ENCODE measurements at regions of chr6 and their contacts with region 1.

Region 1: DNA sequence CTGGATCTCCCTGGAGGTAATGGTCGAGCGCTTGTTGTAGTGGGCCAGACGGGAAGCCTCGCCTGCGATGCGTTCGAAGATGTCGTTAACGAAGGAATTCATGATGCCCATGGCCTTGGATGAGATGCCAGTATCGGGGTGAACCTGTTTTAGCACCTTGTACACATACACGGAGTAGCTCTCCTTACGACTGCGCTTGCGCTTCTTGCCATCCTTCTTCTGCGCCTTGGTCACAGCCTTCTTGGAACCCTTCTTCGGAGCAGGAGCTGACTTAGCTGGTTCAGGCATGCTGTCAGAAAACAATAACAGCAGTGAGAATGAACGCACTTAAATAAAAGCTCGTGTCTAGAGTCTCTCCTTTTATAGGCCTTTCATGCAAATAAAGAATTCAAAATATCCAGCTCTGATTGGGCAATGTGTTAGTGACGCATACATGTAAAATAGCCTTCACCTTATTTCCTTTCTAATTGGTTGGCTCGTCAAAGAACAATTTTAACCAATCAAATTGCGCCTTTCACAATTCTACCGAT is 129.2 kb downstream of the HFE start:
- DNase-seq: peak; percentile 99
- H3K4me3 ChIP-seq: peak overlapping the region; percentile 80
- H3K27ac ChIP-seq: peak overlapping the region; percentile 99
- H3K27me3 ChIP-seq: no peaks in the 10 kb centered on the region
- CTCF ChIP-seq: no peak

Region 2: DNA sequence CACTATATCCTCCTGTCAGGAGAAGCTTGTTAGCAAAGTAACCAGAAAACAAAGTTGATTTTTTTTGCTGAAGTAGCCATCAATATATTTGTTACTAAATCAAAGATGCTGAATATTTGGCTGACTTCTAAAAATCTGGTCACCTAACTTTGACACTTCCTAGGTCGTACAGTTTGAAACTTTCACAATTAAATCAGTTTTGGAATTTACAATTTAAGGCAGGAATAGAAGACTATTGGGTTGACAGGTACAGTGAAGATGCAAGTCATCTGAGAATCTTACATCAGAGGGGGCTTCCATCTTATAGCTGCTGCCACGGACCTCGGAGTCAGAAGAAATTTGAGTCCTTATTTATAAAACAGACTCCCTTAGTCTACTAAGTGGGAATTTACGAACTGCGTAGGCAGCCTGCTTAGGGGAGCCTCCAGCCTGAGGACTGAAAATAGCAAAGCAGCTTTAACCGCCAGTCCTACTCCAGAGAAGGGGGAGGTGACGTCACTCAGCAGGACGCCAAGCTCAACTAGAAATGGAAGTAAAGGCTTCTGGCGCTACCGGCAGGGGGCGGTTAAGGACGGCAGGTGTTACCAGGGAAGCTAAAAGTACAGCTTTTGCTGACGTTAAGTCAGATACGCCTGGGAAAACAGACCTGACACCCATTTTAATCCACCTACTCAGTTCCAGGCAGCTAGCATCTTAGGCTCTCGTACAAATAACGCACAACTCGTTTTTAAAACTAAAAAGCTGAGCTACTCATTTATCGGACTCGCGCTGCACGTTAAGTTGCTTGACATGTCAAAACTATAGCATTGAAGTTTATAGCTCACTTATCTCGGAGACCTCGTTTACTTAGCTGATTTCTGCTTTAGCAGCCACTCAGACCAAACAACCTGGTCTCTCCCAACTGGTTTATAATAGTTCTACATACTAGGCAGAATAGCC is 190.3 kb before region 1 on chr6:
- CTCF ChIA-PET with region 1: no interaction called
- POLR2A ChIA-PET with region 1: interaction called, 11 read pairs
- DNase-seq: peak; percentile 94
- H3K4me3 ChIP-seq: peak overlapping the region; percentile 78
- H3K27ac ChIP-seq: peak overlapping the region; percentile 91
- H3K27me3 ChIP-seq: no peaks in the 10 kb centered on the region
- CTCF ChIP-seq: peak; percentile 93

Region 3: DNA sequence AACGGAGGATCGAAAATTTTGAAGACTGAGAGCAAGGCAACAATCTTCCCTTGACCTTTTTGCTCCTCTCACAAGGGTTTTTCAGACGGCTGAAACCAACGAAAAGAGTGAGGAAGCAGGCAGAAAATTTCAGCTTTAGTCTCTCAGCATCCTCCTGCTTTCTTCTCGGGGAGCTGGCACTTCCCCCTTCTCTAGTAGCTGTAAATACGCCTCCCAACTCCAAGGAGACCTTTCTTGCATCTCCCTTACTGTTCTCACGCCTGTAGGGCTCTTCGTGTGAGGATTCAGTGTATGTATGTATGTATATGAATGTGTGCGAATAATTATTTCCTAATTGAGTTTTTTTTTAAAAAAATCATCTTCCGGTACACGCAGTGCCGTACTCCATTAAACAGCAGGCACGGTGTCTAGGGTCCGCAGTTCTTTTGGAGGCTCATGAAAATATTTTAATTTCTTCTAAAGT is 43.9 kb before region 1 on chr6:
- CTCF ChIA-PET with region 1: interaction called, 4 read pairs
- POLR2A ChIA-PET with region 1: interaction called, 11 read pairs
- DNase-seq: no peak
- H3K4me3 ChIP-seq: peak overlapping the region; percentile 64
- H3K27ac ChIP-seq: peak overlapping the region; percentile 93
- H3K27me3 ChIP-seq: no peaks in the 10 kb centered on the region
- CTCF ChIP-seq: no peak

Region 4: GRCh38 chr6:26204332-26205165 is 11.9 kb before region 1 on chr6:
- CTCF ChIA-PET with region 1: interaction called, 4 read pairs
- POLR2A ChIA-PET with region 1: interaction called, 183 read pairs
- DNase-seq: peak; percentile 98
- H3K4me3 ChIP-seq: peak overlapping the region; percentile 95
- H3K27ac ChIP-seq: peak overlapping the region; percentile 99
- H3K27me3 ChIP-seq: no peaks in the 10 kb centered on the region
- CTCF ChIP-seq: peak; percentile 51

Region 5: GRCh38 chr6:26270903-26271667 is 54.7 kb after region 1 on chr6:
- CTCF ChIA-PET with region 1: interaction called, 5 read pairs
- POLR2A ChIA-PET with region 1: interaction called, 48 read pairs
- DNase-seq: no peak
- H3K4me3 ChIP-seq: peak overlapping the region; percentile 65
- H3K27ac ChIP-seq: peak overlapping the region; percentile 68
- H3K27me3 ChIP-seq: no peaks in the 10 kb centered on the region
- CTCF ChIP-seq: no peak

Region 6: DNA sequence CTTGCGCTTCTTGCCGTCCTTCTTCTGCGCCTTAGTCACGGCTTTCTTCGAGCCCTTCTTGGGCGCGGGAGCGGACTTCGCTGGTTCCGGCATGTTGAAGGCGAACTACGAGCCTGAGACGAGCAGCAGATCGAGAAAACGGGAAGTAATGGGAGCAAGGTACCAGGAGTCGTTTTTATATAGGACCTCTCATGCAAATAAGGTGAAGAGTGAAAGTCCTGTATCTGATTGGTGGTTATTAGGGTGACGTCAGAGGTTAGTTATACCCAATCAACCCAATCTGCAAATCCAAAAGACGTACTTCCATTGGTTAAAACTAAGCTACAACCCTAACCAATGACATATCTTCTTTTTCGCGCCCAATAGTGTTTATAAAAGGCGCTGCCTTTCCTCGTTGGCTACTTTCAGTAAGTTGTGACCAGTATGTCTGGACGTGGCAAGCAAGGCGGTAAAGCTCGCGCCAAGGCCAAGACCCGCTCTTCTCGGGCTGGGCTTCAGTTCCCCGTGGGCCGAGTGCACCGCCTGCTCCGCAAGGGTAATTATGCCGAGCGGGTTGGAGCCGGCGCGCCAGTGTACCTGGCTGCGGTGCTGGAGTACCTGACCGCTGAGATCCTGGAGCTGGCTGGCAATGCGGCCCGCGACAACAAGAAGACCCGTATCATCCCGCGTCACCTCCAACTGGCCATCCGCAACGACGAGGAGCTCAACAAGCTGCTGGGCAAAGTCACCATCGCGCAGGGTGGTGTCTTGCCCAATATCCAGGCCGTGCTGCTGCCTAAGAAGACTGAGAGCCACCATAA is 930.5 kb after region 1 on chr6:
- CTCF ChIA-PET with region 1: no interaction called
- POLR2A ChIA-PET with region 1: interaction called, 15 read pairs
- DNase-seq: peak; percentile 99
- H3K4me3 ChIP-seq: peak overlapping the region; percentile 73
- H3K27ac ChIP-seq: peak overlapping the region; percentile 98
- H3K27me3 ChIP-seq: no peaks in the 10 kb centered on the region
- CTCF ChIP-seq: no peak